ENCODE measurements at regions of chr3 and their contacts with region 1.

Region 1: GRCh38 chr3:102069211-102069662 is 219.9 kb downstream of the NFKBIZ start:
- DNase-seq: peak; percentile 77
- ATAC-seq: peak; percentile 93
- H3K4me3 ChIP-seq: no peak overlapping the region
- H3K27ac ChIP-seq: peak overlapping the region; percentile 77
- H3K4me1 ChIP-seq: peaks cover 23% of the 10 kb centered on the region
- H3K27me3 ChIP-seq: no peaks in the 10 kb centered on the region
- CTCF ChIP-seq: no peak

Region 2: GRCh38 chr3:101117980-101118379 is 951.3 kb before region 1 on chr3:
- CTCF ChIA-PET with region 1: no interaction called
- POLR2A ChIA-PET with region 1: no interaction called
- intact Hi-C with region 1: no loop called
- DNase-seq: no peak
- ATAC-seq: no peak
- H3K4me3 ChIP-seq: no peak overlapping the region
- H3K27ac ChIP-seq: no peak overlapping the region
- H3K4me1 ChIP-seq: peaks cover 16% of the 10 kb centered on the region
- H3K27me3 ChIP-seq: no peaks in the 10 kb centered on the region
- CTCF ChIP-seq: no peak

Region 3: GRCh38 chr3:101995371-101996046 is 73.7 kb before region 1 on chr3:
- CTCF ChIA-PET with region 1: no interaction called
- POLR2A ChIA-PET with region 1: no interaction called
- intact Hi-C with region 1: loop called (anchors 5 kb)
- DNase-seq: peak; percentile 63
- ATAC-seq: peak; percentile 87
- H3K4me3 ChIP-seq: no peak overlapping the region
- H3K27ac ChIP-seq: peak overlapping the region; percentile 61
- H3K4me1 ChIP-seq: peaks cover 27% of the 10 kb centered on the region
- H3K27me3 ChIP-seq: no peaks in the 10 kb centered on the region
- CTCF ChIP-seq: no peak

Region 4: GRCh38 chr3:102038477-102039142 is 30.6 kb before region 1 on chr3:
- CTCF ChIA-PET with region 1: no interaction called
- POLR2A ChIA-PET with region 1: no interaction called
- intact Hi-C with region 1: no loop called
- DNase-seq: no peak
- ATAC-seq: no peak
- H3K4me3 ChIP-seq: no peak overlapping the region
- H3K27ac ChIP-seq: no peak overlapping the region
- H3K4me1 ChIP-seq: peaks cover 15% of the 10 kb centered on the region
- H3K27me3 ChIP-seq: no peaks in the 10 kb centered on the region
- CTCF ChIP-seq: no peak

Region 5: DNA sequence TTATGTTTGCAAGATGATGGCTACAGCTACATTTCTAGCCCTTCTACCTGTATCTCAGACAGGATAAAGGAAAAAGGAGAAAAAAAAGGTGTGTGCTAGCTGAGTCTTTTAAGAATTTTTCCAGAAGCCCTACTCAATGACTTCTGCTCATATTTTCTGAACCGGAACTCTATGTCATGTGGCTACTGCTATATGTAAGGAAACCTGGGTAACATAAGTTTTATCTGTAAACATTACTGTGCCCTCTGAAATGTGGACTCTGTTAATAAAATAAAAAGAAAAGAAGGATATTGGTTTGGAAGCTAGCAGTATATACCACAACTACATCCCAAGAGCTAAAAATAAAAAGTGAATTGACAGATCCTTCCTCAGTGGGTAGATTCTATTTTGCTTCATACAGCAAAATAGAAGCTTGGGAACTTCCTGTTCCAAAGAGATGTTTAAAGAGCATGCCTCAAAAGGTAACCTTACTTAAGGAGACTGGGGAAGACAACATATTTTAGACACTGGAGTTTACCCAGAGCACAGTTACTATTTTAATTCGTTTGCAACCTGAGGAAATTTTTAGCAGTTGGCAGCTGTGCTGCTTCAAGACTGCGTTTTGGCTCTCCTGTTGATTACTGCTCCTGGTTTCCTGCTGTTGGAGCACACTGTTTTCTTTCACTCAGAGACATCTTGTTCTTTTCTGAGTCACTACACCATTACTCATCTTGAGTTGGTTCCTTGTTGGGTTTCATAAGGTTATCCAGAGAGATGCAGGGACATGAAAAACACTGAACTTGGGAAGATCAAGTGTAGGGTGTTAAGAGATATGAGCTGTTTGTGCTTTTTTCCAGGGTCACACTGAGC is 60.7 kb after region 1 on chr3:
- CTCF ChIA-PET with region 1: no interaction called
- POLR2A ChIA-PET with region 1: no interaction called
- intact Hi-C with region 1: no loop called
- DNase-seq: peak; percentile 84
- ATAC-seq: peak; percentile 81
- H3K4me3 ChIP-seq: no peak overlapping the region
- H3K27ac ChIP-seq: peak overlapping the region; percentile 89
- H3K4me1 ChIP-seq: peaks cover 31% of the 10 kb centered on the region
- H3K27me3 ChIP-seq: no peaks in the 10 kb centered on the region
- CTCF ChIP-seq: no peak